AG04450 (cell line): ENCODE measurements at regions of chr3 and their contacts with region 1.

Region 1: DNA sequence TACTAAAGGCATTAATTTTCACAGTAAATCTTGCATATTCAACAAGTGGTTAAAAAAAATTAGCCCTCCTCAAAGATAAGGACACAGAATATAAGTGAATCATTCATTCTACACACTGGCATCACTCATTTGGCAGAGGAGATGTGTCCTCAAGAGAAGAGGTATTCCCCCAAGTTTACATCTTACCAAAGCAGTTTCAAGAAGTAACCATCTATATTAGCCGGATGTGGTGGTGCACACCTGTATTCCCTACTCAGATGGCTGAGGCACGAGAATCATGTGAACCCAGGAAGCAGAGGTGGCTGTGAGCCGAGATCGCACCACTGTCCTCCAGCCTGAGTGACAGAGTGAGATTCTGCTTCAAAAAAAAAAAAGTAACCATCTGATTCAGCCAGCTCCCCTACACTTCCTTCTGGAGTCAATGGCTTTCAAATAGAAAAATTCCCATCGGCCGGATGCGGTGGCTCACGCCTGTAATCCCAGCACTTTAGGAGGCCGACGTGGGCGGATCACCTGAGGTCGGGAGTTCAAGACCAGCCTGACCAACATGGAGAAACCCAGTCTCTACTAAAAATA is 15.4 kb downstream of the RAF1 start:
- DNase-seq: no peak
- H3K4me3 ChIP-seq: no peak overlapping the region
- H3K27ac ChIP-seq: no peak overlapping the region
- H3K27me3 ChIP-seq: no peaks in the 10 kb centered on the region
- CTCF ChIP-seq: no peak

Region 2: DNA sequence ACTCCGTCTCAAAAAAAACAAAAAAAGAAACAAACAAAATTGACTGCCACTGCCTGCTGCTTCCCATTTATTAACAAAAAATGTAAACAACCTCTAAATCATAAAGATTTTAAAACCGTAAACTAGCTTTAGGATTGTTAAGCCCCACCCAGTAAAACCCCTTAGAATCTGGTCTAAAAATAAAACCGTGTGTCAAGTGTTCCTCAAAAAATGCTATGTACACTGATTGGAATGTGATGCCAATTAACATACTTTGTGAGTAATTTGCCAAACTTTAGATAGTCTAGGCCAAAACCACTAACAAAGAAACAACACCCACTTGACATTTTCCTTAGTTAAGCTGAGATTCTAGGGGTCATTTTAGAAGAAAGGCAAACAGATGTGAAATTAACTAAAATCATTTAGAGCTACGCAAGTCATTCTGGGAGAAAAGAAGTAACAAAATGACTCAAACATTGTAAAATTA is 10.2 kb after region 1 on chr3:
- CTCF ChIA-PET with region 1: interaction called, 5 read pairs
- POLR2A ChIA-PET with region 1: interaction called, 10 read pairs
- DNase-seq: no peak
- H3K4me3 ChIP-seq: no peak overlapping the region
- H3K27ac ChIP-seq: peak overlapping the region; percentile 66
- H3K27me3 ChIP-seq: no peaks in the 10 kb centered on the region
- CTCF ChIP-seq: no peak

Region 3: GRCh38 chr3:12681943-12682390 is 33.5 kb after region 1 on chr3:
- CTCF ChIA-PET with region 1: interaction called, 9 read pairs
- POLR2A ChIA-PET with region 1: interaction called, 10 read pairs
- DNase-seq: no peak
- H3K4me3 ChIP-seq: no peak overlapping the region
- H3K27ac ChIP-seq: no peak overlapping the region
- H3K27me3 ChIP-seq: no peaks in the 10 kb centered on the region
- CTCF ChIP-seq: no peak